Breast epithelium (tissue), 4 donors: ENCODE measurements at regions of chr11 and their contacts with region 1.

Region 1: DNA sequence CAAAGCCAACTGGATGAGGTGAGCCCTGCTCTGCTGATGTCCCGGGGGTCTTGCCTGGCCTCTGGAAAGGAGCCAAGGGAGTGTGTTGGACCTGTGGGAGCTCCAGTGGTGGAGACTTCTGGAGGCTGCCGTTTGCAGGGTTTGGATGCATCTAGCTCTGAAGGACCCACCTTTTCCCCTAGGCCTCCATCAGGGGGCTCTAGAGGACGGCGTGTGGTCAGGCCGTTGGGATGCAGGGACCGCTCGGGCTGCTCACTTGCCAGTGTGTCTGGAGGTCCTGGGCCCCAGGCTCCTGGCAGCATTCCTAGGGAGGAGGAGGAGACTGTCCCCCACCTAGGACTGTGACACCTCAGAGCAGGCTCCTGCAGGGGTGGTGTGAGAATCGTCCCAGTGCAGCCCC is 58.3 kb downstream of the PRDM11 start:
- DNase-seq: no peak
- H3K4me3 ChIP-seq: no peak overlapping the region
- H3K27ac ChIP-seq: no peak overlapping the region
- H3K4me1 ChIP-seq: no peaks in the 10 kb centered on the region
- H3K27me3 ChIP-seq: no peaks in the 10 kb centered on the region
- CTCF ChIP-seq: no peak
- POLR2A ChIP-seq: no peak

Region 2: GRCh38 chr11:44989831-44990566 is 214.8 kb before region 1 on chr11:
- intact Hi-C with region 1: no loop called
- DNase-seq: no peak
- H3K4me3 ChIP-seq: no peak overlapping the region
- H3K27ac ChIP-seq: no peak overlapping the region
- H3K4me1 ChIP-seq: peaks cover 0 to 7% of the 10 kb centered on the region in 2 donors
- H3K27me3 ChIP-seq: no peaks in the 10 kb centered on the region
- CTCF ChIP-seq: no peak
- POLR2A ChIP-seq: no peak

Region 3: DNA sequence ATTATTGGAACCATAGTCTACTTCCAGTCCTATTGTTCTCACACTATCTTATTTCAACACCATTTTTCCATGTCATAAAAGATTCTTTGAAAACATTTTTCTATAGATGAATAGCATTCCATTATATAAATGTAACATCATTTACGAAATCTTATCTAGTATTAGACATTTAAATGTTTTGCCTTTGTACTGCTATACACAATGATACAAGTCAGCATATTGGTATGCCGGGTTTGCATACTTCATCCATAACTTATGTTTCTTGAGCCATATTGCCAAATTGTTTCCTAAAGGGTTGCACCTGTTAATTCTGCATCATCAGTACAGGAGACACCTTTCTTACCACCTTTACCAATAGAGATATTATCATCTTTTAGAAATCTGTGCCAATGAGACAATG is 13.2 kb after region 1 on chr11:
- intact Hi-C with region 1: loop called (anchors 1 kb)
- DNase-seq: no peak
- H3K4me3 ChIP-seq: no peak overlapping the region
- H3K27ac ChIP-seq: no peak overlapping the region
- H3K4me1 ChIP-seq: no peaks in the 10 kb centered on the region
- H3K27me3 ChIP-seq: no peaks in the 10 kb centered on the region
- CTCF ChIP-seq: no peak
- POLR2A ChIP-seq: no peak

Region 4: DNA sequence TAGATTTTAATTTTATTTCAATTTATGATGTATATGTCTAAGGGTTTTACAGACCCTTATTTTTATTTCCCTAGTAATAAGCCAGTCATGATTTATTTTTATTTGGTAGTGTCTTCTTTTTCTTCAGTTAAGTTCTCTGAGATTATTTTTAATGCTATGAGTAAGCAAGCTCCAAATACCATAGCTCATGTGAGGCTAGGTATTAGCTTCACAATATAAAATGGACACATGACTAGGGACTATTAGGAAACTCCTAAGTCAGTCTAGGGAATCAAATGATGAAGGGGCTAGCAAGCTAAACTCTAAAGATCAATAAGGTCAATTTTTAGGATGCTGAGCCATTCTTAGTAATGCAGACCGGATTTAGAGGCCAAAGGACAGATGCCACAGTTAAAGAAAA is 1595.4 kb after region 1 on chr11:
- intact Hi-C with region 1: no loop called
- DNase-seq: no peak
- H3K4me3 ChIP-seq: no peak overlapping the region
- H3K27ac ChIP-seq: no peak overlapping the region
- H3K4me1 ChIP-seq: no peaks in the 10 kb centered on the region
- H3K27me3 ChIP-seq: no peaks in the 10 kb centered on the region
- CTCF ChIP-seq: no peak
- POLR2A ChIP-seq: no peak